ENCODE measurements at regions of chr9 and their contacts with region 1.

Region 1: DNA sequence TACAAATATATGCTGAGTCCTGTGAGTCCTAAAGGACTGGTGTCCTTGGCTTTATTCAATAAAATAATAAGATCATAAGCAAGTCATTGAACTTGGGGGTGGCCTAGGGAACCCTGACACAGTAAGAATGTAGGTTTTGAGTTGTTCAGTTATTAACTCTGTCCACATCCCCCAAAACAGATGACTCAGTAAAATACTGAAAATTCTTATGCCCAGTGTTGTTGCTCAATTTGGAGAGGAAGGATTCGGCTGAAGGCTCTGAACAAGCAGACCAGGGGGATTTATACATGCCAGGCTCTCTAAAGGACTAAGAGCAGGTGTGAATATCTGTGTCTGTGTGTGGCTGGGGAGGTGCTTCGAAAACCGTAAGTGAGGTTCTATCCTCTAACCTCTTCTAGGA is 173.7 kb downstream of the RMI1 start:
- DNase-seq: no peak
- H3K4me3 ChIP-seq: no peak overlapping the region
- CTCF ChIP-seq: no peak

Region 2: DNA sequence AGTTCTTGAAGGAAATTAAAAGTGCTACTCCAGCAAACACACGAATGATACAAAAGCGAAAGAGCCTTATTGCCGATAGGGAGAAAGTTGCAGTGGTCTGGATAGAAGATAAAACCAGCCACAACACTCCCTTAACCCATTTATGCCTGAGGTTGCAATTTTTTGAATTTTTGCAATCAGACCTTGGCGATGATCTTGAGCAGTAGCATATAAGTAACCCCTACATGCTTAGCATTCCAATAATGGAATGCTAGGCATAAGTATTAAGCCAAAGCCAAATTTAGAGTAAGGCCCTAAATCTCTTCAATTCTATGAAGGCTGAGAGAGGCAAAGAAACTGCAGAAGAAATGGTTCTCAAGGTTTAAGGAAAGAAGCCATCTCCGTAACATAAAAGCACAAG is 32.8 kb after region 1 on chr9:
- in situ Hi-C with region 1: no loop called
- DNase-seq: peak; percentile 11
- H3K4me3 ChIP-seq: no peak overlapping the region
- CTCF ChIP-seq: no peak

Region 3: DNA sequence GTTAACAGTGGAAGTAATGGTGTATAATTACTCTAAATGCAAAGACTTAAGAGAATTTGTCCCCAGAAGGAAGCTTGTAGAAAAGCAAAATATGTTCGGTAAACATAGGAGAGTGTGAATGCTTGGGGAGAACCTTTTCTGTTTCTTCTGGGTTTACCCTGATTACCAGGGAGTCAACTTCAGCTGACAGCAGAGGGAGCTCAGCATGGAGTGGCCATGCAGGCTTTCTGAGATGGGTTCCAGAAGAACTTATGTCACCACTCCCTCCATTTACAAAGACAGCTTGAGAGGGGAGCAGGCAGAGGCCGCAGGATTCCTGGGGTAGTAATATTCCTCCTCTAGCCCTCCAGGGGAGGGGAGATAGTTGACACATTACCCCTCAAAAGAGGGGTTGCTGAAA is 90.5 kb after region 1 on chr9:
- in situ Hi-C with region 1: loop called (anchors 5 kb)
- DNase-seq: no peak
- H3K4me3 ChIP-seq: no peak overlapping the region
- CTCF ChIP-seq: no peak

Measured in astrocyte of the cerebellum (primary cell).